Common myeloid progenitor, CD34-positive (primary cell): ENCODE measurements at regions of chr20 and their contacts with region 1.

Region 1: DNA sequence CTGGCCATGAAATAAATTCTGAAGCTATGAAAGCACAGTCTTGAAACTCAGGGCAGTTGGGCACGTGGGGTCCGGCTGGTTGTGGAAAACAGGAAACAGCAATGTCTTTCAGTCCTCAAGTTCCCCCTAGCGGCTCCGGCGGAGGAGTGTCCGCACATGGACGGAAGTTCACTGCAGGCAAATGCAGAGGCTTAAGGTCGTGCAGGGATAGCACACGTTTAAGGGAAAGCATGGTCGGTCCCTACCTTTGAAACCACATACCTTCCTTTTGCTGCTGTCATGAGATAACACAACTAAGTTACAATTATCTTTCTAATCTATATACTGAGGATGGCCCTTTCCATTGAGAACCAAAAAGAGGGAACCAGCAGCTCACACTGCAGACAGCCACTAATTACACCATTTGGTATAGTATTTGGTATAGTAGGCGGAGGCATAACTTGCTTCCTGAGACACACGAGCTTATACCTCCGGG is 52.6 kb upstream of the NFATC2 start:
- DNase-seq: peak; percentile 84 to 92 (median 91)
- H3K4me3 ChIP-seq: peak overlapping the region in 2 of 7 experiments; percentile 22 to 45
- H3K27ac ChIP-seq: peak overlapping the region in 1 of 2 experiments; percentile 43
- H3K4me1 ChIP-seq: peaks cover 9 to 16% (median 15%) of the 10 kb centered on the region in 4 experiments
- H3K27me3 ChIP-seq: no peaks in the 10 kb centered on the region

Region 2: DNA sequence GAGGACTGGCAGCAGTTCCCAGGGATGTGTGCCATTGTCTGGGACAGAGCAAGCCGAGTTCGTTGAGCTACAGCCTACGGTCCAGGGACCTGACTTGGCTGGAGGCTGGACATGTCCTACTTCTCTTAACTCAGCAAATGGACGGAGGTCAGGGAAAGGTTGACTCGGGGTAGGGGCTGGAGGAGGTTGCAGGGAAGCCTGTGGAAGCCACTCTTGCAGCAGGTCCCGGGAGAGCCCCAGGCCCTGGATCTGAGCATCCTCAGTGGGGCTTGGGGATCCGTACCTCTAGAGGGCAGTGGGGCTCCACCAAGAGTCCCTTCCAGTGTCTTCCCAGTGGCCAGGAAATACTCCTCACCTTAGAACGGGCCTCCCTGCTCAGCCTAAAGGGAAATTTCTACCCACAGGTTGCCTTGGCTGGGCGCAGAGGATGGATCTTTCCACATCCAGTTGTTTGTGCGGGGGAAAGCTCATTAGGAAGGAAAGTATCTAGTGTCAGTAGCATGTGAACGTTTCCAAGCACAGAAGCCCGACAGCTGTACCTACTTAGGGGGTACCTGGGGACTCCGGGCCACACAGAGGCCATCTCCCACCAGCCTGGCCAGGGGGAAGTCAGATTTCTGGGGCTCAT is 222.8 kb before region 1 on chr20:
- CTCF ChIA-PET with region 1: interaction called, 31 read pairs
- POLR2A ChIA-PET with region 1: no interaction called
- DNase-seq: peak; percentile 40 to 61 (median 53)
- H3K4me3 ChIP-seq: no peak overlapping the region
- H3K27ac ChIP-seq: no peak overlapping the region
- H3K4me1 ChIP-seq: peaks cover 0 to 31% (median 20%) of the 10 kb centered on the region in 4 experiments
- H3K27me3 ChIP-seq: no peaks in the 10 kb centered on the region

Region 3: GRCh38 chr20:51412333-51412871 is 182.7 kb before region 1 on chr20:
- CTCF ChIA-PET with region 1: interaction called, 22 read pairs
- POLR2A ChIA-PET with region 1: no interaction called
- DNase-seq: no peak
- H3K4me3 ChIP-seq: no peak overlapping the region
- H3K27ac ChIP-seq: peak overlapping the region in 1 of 2 experiments; percentile 49
- H3K4me1 ChIP-seq: peaks cover 0 to 20% (median 14%) of the 10 kb centered on the region in 4 experiments
- H3K27me3 ChIP-seq: no peaks in the 10 kb centered on the region

Region 4: DNA sequence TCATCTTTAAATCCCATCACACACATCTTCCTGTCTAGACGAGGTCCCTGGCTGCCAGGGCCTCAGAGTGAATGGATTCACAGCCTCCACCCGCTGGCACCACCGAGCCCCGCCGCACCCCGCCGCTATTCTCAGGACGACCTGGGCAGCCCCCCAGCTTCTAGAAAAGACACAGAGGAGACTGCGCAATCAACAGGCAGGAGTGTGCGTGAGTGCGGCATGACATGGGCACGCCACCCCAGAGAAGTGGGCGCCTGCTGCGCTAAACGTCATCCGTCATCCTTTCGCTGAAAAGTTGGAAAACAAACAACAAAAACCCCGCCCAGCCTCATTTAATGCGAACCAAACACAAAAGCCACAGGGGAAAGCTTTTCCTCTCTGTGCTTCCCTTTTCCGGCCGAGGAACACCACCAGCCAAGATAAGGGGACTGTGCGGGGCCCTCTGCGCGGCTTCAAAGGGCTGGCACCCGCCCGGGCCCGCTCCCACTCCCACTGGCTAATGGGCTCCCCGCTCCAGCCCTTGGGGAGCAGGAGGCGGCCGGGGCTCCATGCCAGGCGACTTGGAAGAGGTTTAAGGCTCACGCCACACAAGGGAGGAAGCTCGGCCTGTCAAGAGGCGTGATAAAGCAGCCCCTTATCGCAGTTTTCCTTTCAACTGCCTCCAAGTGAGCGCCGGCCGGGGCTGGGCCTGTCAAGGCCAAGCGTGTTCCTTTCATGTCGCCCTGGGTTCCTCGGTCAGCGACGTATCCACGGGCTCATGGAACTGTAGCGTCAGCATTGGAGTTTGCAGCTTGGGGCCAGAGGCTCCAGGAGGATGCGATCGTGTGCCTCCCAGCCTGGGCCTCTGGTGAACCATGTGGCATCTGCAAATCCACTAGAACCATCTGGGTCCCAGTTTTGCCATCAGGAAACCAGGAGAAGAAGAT is 102.7 kb before region 1 on chr20:
- CTCF ChIA-PET with region 1: interaction called, 21 read pairs
- POLR2A ChIA-PET with region 1: no interaction called
- DNase-seq: peak; percentile 77 to 88 (median 82)
- H3K4me3 ChIP-seq: peak overlapping the region in 5 of 7 experiments; percentile 27 to 58 (median 52)
- H3K27ac ChIP-seq: peak overlapping the region; percentile 52 to 76
- H3K4me1 ChIP-seq: peaks cover 5 to 80% (median 75%) of the 10 kb centered on the region in 4 experiments
- H3K27me3 ChIP-seq: no peaks in the 10 kb centered on the region

Region 5: GRCh38 chr20:51608061-51608460 is 13.0 kb after region 1 on chr20:
- CTCF ChIA-PET with region 1: interaction called, 10 read pairs
- POLR2A ChIA-PET with region 1: no interaction called
- DNase-seq: no peak
- H3K4me3 ChIP-seq: no peak overlapping the region
- H3K27ac ChIP-seq: no peak overlapping the region
- H3K4me1 ChIP-seq: peaks cover 0 to 4% (median 1%) of the 10 kb centered on the region in 4 experiments
- H3K27me3 ChIP-seq: no peaks in the 10 kb centered on the region

Region 6: DNA sequence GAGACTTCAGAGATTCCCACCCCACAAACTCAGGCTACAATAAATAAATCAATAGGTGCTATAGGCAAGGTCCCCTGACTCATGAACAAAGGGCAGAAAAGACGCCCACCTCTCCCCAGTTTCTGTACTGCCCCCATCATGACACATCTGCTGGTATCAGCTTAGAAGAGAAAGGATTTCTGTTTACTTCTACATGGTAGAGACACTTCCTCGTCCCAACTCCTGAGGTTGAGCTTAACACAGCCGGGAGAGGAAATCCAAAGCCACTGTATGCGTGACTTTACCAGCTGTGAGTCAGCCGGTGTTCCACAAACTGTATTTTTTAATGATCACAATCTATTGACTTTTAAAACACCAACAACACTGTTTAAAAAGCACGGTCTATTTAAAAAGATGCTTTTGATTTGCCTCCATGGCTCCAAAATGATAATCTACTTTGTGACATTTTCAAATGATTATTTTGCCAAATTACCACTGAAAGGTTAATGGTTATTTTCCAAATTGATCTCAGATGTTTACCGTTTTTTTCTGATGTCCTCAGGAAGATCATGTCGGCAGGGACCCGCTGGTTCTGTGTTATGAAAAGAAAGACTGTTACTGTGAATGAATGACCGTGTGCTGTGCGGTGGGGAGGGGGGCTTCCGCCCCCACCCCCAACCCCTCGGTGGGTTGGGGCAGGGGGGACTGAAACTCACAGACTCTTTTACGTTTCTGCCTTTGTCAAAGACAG is 100.6 kb after region 1 on chr20:
- CTCF ChIA-PET with region 1: no interaction called
- POLR2A ChIA-PET with region 1: no interaction called
- DNase-seq: peak; percentile 80 to 88 (median 81)
- H3K4me3 ChIP-seq: peak overlapping the region in 5 of 7 experiments; percentile 8 to 62 (median 55)
- H3K27ac ChIP-seq: peak overlapping the region; percentile 65 to 81
- H3K4me1 ChIP-seq: peaks cover 9 to 48% (median 26%) of the 10 kb centered on the region in 4 experiments
- H3K27me3 ChIP-seq: no peaks in the 10 kb centered on the region